PC-3 (cell line): ENCODE measurements at regions of chr4 and their contacts with region 1.

Region 1: DNA sequence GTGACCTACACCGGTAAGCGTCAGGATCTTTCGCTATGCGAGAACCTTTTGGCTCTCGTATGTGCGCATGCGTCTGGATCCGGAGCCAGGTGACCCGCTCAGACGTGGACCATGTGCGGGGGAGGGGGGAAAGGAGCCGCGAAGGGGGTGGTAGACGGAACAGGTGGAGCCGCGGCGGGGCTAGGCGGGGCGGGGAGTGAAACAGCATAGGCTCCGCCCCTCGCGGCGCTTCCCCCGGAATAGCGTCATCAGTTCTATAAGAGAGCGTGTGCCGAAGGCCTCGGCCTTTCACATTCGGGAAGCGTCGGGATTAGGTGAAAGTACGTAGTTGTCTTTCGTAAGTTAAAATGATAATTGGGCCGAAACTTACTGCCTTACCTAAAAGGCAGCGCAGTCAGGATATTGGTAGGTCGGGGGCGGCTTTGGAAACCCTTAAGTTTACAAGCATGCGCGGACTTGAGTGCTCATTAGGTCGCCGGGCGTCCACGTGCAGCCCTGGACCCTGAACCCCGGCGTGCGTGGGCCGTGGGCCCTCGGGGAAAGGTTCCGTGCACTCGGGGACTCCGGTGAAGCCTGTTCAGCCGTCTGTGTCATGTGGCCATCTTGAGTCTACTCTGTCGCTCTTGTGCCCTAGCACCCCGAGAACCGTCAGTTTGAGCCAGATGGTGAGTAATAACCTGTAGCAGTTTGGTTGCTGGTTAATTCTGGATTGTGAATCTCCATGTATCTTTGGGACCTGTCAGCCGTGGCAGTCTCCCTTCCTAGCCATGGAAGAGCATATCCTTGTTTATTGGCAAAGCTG is 74.1 kb downstream of the PRSS12 start:
- DNase-seq: peak; percentile 92
- ATAC-seq: peak; percentile 85
- H3K4me3 ChIP-seq: peak overlapping the region; percentile 100
- H3K27ac ChIP-seq: peak overlapping the region; percentile 77
- H3K4me1 ChIP-seq: peaks cover 15% of the 10 kb centered on the region
- H3K27me3 ChIP-seq: no peaks in the 10 kb centered on the region
- CTCF ChIP-seq: no peak

Region 2: DNA sequence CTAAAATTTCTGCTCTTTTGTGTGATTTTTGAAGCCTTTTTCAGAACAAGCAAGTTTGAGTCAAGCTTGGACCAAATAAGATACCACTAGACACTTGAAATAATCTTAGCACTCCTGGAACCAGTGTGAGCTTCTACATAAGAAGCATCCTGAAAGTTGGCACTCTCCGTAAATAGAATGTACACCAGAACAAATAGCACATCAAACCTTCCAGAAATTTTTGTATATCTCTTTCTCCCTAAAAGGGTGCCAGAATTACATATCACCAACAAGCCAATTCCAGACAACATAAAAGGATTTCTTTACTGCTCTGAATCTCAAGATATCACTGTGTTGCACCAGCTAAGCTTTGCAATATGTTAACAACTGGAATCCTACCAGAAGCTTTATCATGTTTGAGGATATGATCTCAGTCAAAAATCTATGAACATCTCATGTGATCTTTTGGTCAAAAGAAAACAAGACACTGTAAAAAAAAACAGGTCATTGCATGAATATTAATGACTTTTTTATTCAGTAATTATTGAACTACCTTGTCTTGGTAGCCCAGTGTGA is 43.0 kb before region 1 on chr4:
- CTCF ChIA-PET with region 1: no interaction called
- POLR2A ChIA-PET with region 1: no interaction called
- intact Hi-C with region 1: no loop called
- DNase-seq: no peak
- ATAC-seq: no peak
- H3K4me3 ChIP-seq: no peak overlapping the region
- H3K27ac ChIP-seq: no peak overlapping the region
- H3K4me1 ChIP-seq: no peaks in the 10 kb centered on the region
- H3K27me3 ChIP-seq: no peaks in the 10 kb centered on the region
- CTCF ChIP-seq: no peak

Region 3: DNA sequence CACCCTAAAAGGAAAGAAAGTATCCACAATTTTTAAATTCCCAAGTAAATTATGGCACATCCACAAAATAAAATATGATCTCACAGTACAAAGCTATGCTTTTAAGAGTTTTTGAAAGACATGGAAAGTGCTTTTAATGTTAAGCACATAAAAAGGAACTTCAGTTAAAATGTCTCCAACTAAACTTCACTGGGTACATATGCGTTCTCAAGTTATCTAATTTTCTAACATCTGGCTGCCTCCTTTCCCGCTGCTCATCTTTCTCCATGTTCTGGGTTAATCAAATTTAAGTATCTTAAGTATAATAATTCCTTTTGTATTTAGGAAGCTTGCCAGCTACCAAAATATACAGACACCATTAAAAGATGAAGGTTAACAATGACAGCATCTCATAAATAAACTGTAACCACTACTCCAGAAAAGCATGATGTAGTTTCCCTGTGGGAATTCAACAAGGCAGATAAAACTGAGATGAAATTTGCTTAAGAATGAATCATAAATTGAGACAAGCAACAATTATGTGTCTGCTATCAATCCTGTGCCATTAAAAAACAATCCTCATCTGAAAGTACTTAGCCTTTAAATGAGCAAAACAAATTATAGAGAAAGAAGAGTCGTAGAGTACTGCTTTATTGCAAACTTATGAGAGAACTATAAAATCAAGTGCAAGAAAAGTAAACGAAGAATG is 49.0 kb after region 1 on chr4:
- CTCF ChIA-PET with region 1: no interaction called
- POLR2A ChIA-PET with region 1: no interaction called
- intact Hi-C with region 1: loop called (anchors 5 kb)
- DNase-seq: no peak
- ATAC-seq: peak; percentile 69
- H3K4me3 ChIP-seq: no peak overlapping the region
- H3K27ac ChIP-seq: no peak overlapping the region
- H3K4me1 ChIP-seq: no peaks in the 10 kb centered on the region
- H3K27me3 ChIP-seq: no peaks in the 10 kb centered on the region
- CTCF ChIP-seq: no peak

Region 4: GRCh38 chr4:118352843-118353533 is 74.3 kb after region 1 on chr4 and contains the start of gene PRSS12:
- CTCF ChIA-PET with region 1: no interaction called
- POLR2A ChIA-PET with region 1: no interaction called
- intact Hi-C with region 1: loop called (anchors 2 kb)
- DNase-seq: peak; percentile 60
- ATAC-seq: peak; percentile 93
- H3K4me3 ChIP-seq: peak within 1 kb of the TSS; percentile 67
- H3K27ac ChIP-seq: no peak within 1 kb of the TSS
- H3K4me1 ChIP-seq: no peaks in the 10 kb centered on the region
- H3K27me3 ChIP-seq: no peaks in the 10 kb centered on the region
- CTCF ChIP-seq: peak; percentile 59
- total RNA-seq, gene PRSS12: 0.58 and 1.5 TPM in 2 replicates

Region 5: DNA sequence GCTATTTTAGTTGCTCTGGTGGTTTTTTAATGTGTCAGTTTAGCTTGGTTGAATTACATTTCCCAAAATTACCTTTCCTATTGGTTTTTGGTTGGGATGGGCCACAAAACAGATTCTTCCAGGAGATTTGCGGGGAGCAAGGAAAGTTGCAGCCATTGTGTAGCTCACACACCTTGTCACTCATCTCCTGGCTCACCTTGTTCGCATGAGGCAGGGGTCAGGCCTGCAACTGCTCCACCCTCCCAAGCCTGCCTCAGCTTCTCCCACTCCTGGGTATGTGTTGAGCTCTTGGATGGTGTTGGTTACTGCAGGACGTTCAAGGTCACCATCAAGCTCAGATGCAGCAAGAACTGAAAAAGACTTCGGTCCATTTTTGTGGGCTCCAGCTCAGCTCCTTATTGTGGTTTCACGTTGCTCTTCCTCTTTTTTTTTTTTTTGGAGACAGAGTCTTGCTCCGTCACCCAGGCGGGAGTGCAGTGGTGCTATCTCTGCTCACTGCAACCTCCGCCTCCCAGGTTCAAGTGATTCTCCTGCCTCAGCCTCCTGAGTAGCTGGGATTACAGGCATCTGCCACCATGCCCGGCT is 310.9 kb after region 1 on chr4:
- CTCF ChIA-PET with region 1: no interaction called
- POLR2A ChIA-PET with region 1: no interaction called
- intact Hi-C with region 1: loop called (anchors 10 kb)
- DNase-seq: no peak
- ATAC-seq: no peak
- H3K4me3 ChIP-seq: no peak overlapping the region
- H3K27ac ChIP-seq: no peak overlapping the region
- H3K4me1 ChIP-seq: no peaks in the 10 kb centered on the region
- H3K27me3 ChIP-seq: peaks cover 4% of the 10 kb centered on the region
- CTCF ChIP-seq: no peak